ENCODE measurements at regions of chr14 and their contacts with region 1.

Region 1: GRCh38 chr14:55212634-55213033 is 21.2 kb upstream of the DLGAP5 start:
- DNase-seq: no peak
- ATAC-seq: no peak
- H3K4me3 ChIP-seq: no peak overlapping the region
- H3K4me3 Mint-ChIP-seq: no peak overlapping the region
- H3K27ac ChIP-seq: no peak overlapping the region
- H3K27ac Mint-ChIP-seq: no peak overlapping the region
- H3K4me1 ChIP-seq: no peaks in the 10 kb centered on the region
- H3K4me1 Mint-ChIP-seq: peaks cover 0 to 5% (median 5%) of the 10 kb centered on the region in 7 donors
- H3K27me3 ChIP-seq: no peaks in the 10 kb centered on the region
- H3K27me3 Mint-ChIP-seq: peaks cover 0 to 11% (median 0%) of the 10 kb centered on the region in 5 donors

Region 2: DNA sequence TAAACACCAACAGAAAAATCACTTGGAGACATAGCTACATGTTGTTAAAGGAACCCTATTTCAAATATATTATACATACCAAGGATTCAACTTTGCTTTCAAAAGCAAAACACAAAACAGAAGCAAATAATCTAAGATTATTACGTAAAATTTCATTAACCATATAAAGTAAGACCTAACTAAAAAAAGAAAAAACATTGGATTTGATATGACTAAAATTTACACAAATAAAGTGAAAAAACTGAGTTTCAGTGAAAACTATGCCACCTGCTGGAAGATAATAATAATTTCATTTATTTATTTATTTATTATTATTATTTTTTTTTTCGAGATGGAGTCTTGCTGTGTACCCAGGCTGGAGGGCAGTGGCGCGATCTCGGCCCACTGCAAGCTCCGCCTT is 230.9 kb before region 1 on chr14:
- CTCF ChIA-PET with region 1: no interaction called
- POLR2A ChIA-PET with region 1: no interaction called
- intact Hi-C with region 1: no loop called
- DNase-seq: no peak
- ATAC-seq: no peak
- H3K4me3 ChIP-seq: no peak overlapping the region
- H3K4me3 Mint-ChIP-seq: no peak overlapping the region
- H3K27ac ChIP-seq: no peak overlapping the region
- H3K27ac Mint-ChIP-seq: no peak overlapping the region
- H3K4me1 ChIP-seq: no peaks in the 10 kb centered on the region
- H3K4me1 Mint-ChIP-seq: peaks cover 0 to 2% (median 0%) of the 10 kb centered on the region in 7 donors
- H3K27me3 ChIP-seq: no peaks in the 10 kb centered on the region
- H3K27me3 Mint-ChIP-seq: no peaks in the 10 kb centered on the region

Region 3: GRCh38 chr14:55191203-55192053 is 21.2 kb before region 1 on chr14 and contains the start of gene DLGAP5:
- CTCF ChIA-PET with region 1: no interaction called
- POLR2A ChIA-PET with region 1: no interaction called
- intact Hi-C with region 1: loop called in 1 of 2 experiments (anchors 1 kb)
- DNase-seq: peak; percentile 59 to 90 (median 86)
- ATAC-seq: peak; percentile 98
- H3K4me3 ChIP-seq: peak within 1 kb of the TSS; percentile 84
- H3K4me3 Mint-ChIP-seq: peak within 1 kb of the TSS; percentile 88 to 97 (median 90)
- H3K27ac ChIP-seq: peak within 1 kb of the TSS; percentile 58
- H3K27ac Mint-ChIP-seq: peak within 1 kb of the TSS; percentile 46 to 92 (median 68)
- H3K4me1 ChIP-seq: peaks cover 7 to 10% of the 10 kb centered on the region in 2 donors
- H3K4me1 Mint-ChIP-seq: peaks cover 5 to 42% (median 18%) of the 10 kb centered on the region in 7 donors
- H3K27me3 ChIP-seq: no peaks in the 10 kb centered on the region
- H3K27me3 Mint-ChIP-seq: peaks cover 0 to 4% (median 0%) of the 10 kb centered on the region in 5 donors
- total RNA-seq, gene DLGAP5: 0.49 to 46.7 TPM in 2 of 5 experiments, not detected in the others

Region 4: GRCh38 chr14:55245657-55246268 is 33.1 kb after region 1 on chr14:
- CTCF ChIA-PET with region 1: no interaction called
- POLR2A ChIA-PET with region 1: no interaction called
- intact Hi-C with region 1: loop called in 1 of 2 experiments (anchors 1 kb)
- DNase-seq: peak in 7 of 9 donors; percentile 15 to 52 (median 34)
- ATAC-seq: peak; percentile 75
- H3K4me3 ChIP-seq: no peak overlapping the region
- H3K4me3 Mint-ChIP-seq: no peak overlapping the region
- H3K27ac ChIP-seq: no peak overlapping the region
- H3K27ac Mint-ChIP-seq: no peak overlapping the region
- H3K4me1 ChIP-seq: no peaks in the 10 kb centered on the region
- H3K4me1 Mint-ChIP-seq: no peaks in the 10 kb centered on the region
- H3K27me3 ChIP-seq: no peaks in the 10 kb centered on the region
- H3K27me3 Mint-ChIP-seq: peaks cover 8 to 45% (median 12%) of the 10 kb centered on the region in 5 donors

Region 5: GRCh38 chr14:55316567-55316966 is 103.9 kb after region 1 on chr14:
- CTCF ChIA-PET with region 1: no interaction called
- POLR2A ChIA-PET with region 1: no interaction called
- intact Hi-C with region 1: no loop called
- DNase-seq: no peak
- ATAC-seq: no peak
- H3K4me3 ChIP-seq: no peak overlapping the region
- H3K4me3 Mint-ChIP-seq: no peak overlapping the region
- H3K27ac ChIP-seq: no peak overlapping the region
- H3K27ac Mint-ChIP-seq: peak overlapping the region in 1 of 9 donors; percentile 12
- H3K4me1 ChIP-seq: no peaks in the 10 kb centered on the region
- H3K4me1 Mint-ChIP-seq: peaks cover 0 to 19% (median 6%) of the 10 kb centered on the region in 7 donors
- H3K27me3 ChIP-seq: no peaks in the 10 kb centered on the region
- H3K27me3 Mint-ChIP-seq: no peaks in the 10 kb centered on the region